ENCODE measurements at regions of chr2 and their contacts with region 1.

Region 1: GRCh38 chr2:202780514-202781021 is 91.0 kb downstream of the ICA1L start:
- DNase-seq: peak; percentile 48
- H3K4me3 ChIP-seq: no peak overlapping the region
- H3K27ac ChIP-seq: no peak overlapping the region
- H3K4me1 ChIP-seq: peaks cover 8% of the 10 kb centered on the region
- H3K27me3 ChIP-seq: no peaks in the 10 kb centered on the region
- CTCF ChIP-seq: no peak
- POLR2A ChIP-seq: no peak

Region 2: DNA sequence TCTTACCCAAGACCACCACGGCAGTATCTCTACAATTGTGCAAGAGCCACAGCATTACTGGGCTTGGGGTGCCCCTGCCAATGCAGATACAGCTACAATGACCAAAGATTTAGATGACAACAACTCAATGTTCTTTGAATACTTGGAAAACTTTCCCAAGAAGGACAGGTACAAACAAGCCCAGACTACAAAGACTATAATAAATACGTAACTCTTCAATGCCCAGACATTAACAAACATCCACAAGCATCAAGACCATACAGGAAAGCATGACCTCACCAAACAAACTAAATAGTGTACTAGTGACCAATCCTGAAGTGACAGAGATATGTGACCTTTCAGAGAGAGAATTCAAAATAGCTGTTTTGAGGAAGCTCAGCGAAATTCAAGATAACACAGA is 28.2 kb after region 1 on chr2:
- CTCF ChIA-PET with region 1: no interaction called
- POLR2A ChIA-PET with region 1: no interaction called
- dilution Hi-C with region 1: no loop called
- intact Hi-C with region 1: loop called (anchors 1 kb)
- DNase-seq: no peak
- H3K4me3 ChIP-seq: no peak overlapping the region
- H3K27ac ChIP-seq: no peak overlapping the region
- H3K4me1 ChIP-seq: peaks cover 15% of the 10 kb centered on the region
- H3K27me3 ChIP-seq: no peaks in the 10 kb centered on the region
- CTCF ChIP-seq: no peak
- POLR2A ChIP-seq: no peak